ENCODE measurements at regions of chr10 and their contacts with region 1.

Region 1: GRCh38 chr10:13787015-13787421 is 200.3 kb downstream of the PRPF18 start:
- DNase-seq: peak; percentile 37
- ATAC-seq: no peak
- H3K4me3 ChIP-seq: no peak overlapping the region
- H3K27ac ChIP-seq: no peak overlapping the region
- H3K4me1 ChIP-seq: peaks cover 21% of the 10 kb centered on the region
- H3K27me3 ChIP-seq: no peaks in the 10 kb centered on the region
- CTCF ChIP-seq: no peak
- POLR2A ChIP-seq: no peak
- RAD21 ChIP-seq: no peak

Region 2: DNA sequence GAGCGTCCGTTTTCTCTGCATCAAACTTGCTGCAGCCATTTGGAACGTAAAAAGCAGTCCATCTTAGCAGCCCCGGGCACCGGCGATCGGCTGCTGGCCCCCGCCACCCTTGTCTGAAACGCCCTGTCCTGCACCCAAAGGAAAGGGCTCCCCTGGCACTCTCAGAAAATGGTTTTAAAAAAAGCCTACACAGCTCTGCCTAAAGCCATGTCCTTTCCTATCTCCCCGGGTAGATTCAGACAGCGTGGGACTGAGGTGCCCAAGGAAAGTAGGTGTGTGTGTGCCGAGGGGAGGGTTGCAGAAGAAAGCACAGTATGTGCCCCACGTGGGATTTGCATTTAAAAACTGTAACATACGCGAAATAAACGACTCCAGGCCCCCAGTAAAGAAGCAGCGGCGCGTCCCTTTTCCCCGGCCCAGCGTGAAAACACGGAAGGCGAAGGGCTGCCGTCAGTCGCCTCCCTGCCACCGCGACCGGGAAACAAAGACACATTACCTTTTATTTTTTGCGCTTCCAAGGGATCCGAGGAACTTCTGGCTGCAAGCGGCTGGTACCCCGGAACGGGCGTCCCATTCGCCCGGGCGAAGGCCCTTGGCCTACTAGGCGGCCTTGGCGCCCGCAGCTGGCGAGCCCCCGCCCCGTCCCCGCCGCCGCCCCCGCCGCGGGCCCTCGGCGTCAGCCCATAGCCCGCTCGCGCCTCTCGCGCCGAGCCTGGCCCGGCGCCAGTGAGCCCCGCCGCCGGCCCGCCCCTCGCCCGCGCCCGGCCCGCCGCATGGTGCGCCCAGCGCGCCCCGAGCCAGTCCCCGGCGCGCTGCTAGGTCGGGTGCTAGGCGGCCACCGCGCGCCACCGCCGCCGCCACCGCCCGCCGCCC is 104.3 kb after region 1 on chr10:
- CTCF ChIA-PET with region 1: no interaction called
- POLR2A ChIA-PET with region 1: no interaction called
- dilution Hi-C with region 1: no loop called
- in situ Hi-C with region 1: no loop called
- intact Hi-C with region 1: loop called (anchors 5 kb)
- DNase-seq: no peak
- ATAC-seq: peak; percentile 64
- H3K4me3 ChIP-seq: peak overlapping the region; percentile 62
- H3K27ac ChIP-seq: peak overlapping the region; percentile 73
- H3K4me1 ChIP-seq: peaks cover 13% of the 10 kb centered on the region
- H3K27me3 ChIP-seq: no peaks in the 10 kb centered on the region
- CTCF ChIP-seq: no peak
- POLR2A ChIP-seq: peak; percentile 24; the same call in 1 of the 2 replicates
- RAD21 ChIP-seq: no peak

Region 3: DNA sequence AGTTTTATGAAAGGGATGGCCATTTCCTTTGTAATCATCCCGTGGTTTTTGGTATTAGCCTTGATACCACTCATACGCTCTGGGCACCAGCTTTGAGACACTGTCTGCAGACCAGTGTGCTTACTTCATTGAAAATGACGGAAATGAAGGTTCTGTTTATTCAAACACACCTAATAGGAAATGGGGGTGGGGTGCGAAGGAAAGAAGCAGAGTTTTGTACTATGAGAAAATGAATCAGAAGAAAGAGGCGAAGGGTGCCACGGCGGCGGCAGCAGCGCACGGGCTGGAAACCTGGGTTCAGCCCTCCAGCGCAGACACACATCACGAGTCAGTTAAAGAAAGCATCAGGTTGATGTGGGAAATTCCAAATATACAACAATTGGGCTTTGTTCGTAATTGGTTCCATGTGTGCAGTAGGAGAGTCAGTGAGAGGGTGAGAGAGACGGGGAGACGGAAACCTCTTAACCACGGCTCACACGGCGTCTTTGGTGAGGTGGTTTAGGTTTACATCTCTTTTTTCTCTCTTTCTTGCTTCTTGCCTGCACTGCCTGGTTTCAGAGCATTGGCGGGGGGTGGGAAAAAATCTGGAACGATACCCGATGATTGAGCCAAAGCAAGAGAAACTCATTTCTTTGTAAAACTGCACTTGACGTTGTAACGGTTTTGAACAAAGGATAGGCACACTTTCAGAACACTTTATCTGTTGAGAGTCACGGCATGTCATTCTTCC is 222.5 kb after region 1 on chr10:
- CTCF ChIA-PET with region 1: no interaction called
- POLR2A ChIA-PET with region 1: no interaction called
- dilution Hi-C with region 1: no loop called
- in situ Hi-C with region 1: no loop called
- intact Hi-C with region 1: loop called (anchors 1 kb)
- DNase-seq: peak; percentile 90
- ATAC-seq: peak; percentile 15
- H3K4me3 ChIP-seq: peak overlapping the region; percentile 32
- H3K27ac ChIP-seq: peak overlapping the region; percentile 85
- H3K4me1 ChIP-seq: peaks cover 5% of the 10 kb centered on the region
- H3K27me3 ChIP-seq: no peaks in the 10 kb centered on the region
- CTCF ChIP-seq: no peak
- POLR2A ChIP-seq: peak; percentile 76
- RAD21 ChIP-seq: 0 out of 2 replicates have a peak, but pooled peaks have one; percentile 1

Region 4: DNA sequence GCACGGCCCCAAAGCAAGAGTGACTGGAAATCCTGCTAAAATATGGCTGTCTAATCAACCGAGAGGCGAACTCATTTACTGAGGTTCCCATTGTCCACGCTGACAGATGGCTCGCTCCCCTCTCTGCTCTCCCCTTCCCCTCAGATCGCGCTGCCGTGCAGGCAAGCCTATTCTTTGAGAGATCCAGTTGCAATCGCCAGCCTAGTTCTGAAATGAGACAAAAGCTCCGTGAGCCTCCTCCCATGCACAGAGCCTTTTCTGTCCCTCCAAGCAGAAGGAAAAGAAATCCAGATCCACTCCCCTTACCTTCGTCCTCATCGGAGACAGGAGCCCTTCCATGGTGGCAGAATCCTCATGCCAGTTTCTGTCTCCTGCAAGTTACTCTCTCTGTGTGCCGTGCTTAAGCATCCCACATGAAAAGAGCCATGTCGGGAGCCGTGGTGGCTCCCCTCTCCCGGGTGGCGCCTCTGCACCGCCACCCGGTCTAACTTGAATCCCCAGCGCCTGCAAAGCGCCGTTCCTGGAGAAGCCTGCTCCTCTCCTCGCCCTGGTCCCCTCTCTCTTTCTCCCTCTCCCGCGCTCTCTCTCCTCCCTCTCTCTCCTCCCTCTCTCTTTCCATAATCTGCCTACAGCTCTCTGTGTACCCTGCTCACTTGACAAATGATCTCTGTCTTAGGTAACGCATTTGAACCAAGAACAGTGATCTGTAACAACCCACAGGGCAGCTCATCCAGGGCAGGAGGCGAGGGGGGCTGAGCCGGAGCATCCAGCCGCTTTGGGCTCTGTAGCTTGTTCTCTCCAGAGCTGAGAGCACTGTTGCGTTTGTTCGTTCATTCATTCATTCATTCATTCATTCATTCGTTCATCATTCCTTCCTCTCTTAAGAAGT is 386.9 kb after region 1 on chr10:
- CTCF ChIA-PET with region 1: no interaction called
- POLR2A ChIA-PET with region 1: no interaction called
- dilution Hi-C with region 1: no loop called
- in situ Hi-C with region 1: loop called (anchors 10 kb)
- intact Hi-C with region 1: no loop called
- DNase-seq: peak; percentile 21
- ATAC-seq: peak; percentile 80
- H3K4me3 ChIP-seq: peak overlapping the region; percentile 54
- H3K27ac ChIP-seq: peak overlapping the region; percentile 46
- H3K4me1 ChIP-seq: no peaks in the 10 kb centered on the region
- H3K27me3 ChIP-seq: peaks cover 49% of the 10 kb centered on the region
- CTCF ChIP-seq: no peak
- POLR2A ChIP-seq: no peak
- RAD21 ChIP-seq: no peak

Region 5: DNA sequence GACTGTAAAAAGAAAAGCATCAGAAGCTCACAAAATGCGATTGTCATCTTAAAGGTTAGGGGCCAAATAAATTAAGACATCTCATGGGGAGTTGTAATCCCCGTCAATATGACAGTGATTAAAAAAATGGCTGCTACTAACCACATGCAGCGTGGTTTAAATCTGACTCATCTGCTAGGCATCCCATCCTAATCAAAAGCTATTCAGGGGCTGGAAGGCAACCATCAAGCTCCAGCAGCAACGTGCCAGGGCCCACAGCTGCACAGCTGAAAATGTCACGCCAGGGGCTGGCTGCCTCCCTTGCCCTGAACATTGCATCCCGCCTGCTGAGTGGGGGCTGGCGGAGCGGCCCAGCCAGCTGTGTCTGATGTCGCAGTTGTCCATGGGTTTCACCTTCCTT is 610.0 kb after region 1 on chr10:
- CTCF ChIA-PET with region 1: no interaction called
- POLR2A ChIA-PET with region 1: no interaction called
- dilution Hi-C with region 1: no loop called
- in situ Hi-C with region 1: no loop called
- intact Hi-C with region 1: loop called (anchors 10 kb)
- DNase-seq: peak; percentile 100
- ATAC-seq: peak; percentile 92
- H3K4me3 ChIP-seq: no peak overlapping the region
- H3K27ac ChIP-seq: peak overlapping the region; percentile 47; the same call in 1 of the 2 replicates
- H3K4me1 ChIP-seq: peaks cover 20% of the 10 kb centered on the region
- H3K27me3 ChIP-seq: no peaks in the 10 kb centered on the region
- CTCF ChIP-seq: no peak
- POLR2A ChIP-seq: peak; percentile 47
- RAD21 ChIP-seq: peak; percentile 8; the same call in 1 of the 2 replicates

Region 6: GRCh38 chr10:14486777-14487487 is 699.9 kb after region 1 on chr10:
- CTCF ChIA-PET with region 1: interaction called, 3 read pairs
- POLR2A ChIA-PET with region 1: no interaction called
- dilution Hi-C with region 1: no loop called
- in situ Hi-C with region 1: loop called (anchors 10 kb)
- intact Hi-C with region 1: no loop called
- DNase-seq: peak; percentile 94
- ATAC-seq: peak; percentile 83
- H3K4me3 ChIP-seq: 0 out of 2 replicates have a peak overlapping the region, but pooled peaks have one; percentile 4
- H3K27ac ChIP-seq: peak overlapping the region; percentile 91
- H3K4me1 ChIP-seq: peaks cover 9% of the 10 kb centered on the region
- H3K27me3 ChIP-seq: no peaks in the 10 kb centered on the region
- CTCF ChIP-seq: no peak
- POLR2A ChIP-seq: no peak
- RAD21 ChIP-seq: no peak